ENCODE measurements at regions of chr1 and their contacts with region 1.

Region 1: GRCh38 chr1:113978863-113979702 is at the start of gene OLFML3:
- DNase-seq: peak; percentile 77
- H3K4me3 ChIP-seq: peak within 1 kb of the TSS; percentile 66
- CTCF ChIP-seq: peak; percentile 61

Region 2: DNA sequence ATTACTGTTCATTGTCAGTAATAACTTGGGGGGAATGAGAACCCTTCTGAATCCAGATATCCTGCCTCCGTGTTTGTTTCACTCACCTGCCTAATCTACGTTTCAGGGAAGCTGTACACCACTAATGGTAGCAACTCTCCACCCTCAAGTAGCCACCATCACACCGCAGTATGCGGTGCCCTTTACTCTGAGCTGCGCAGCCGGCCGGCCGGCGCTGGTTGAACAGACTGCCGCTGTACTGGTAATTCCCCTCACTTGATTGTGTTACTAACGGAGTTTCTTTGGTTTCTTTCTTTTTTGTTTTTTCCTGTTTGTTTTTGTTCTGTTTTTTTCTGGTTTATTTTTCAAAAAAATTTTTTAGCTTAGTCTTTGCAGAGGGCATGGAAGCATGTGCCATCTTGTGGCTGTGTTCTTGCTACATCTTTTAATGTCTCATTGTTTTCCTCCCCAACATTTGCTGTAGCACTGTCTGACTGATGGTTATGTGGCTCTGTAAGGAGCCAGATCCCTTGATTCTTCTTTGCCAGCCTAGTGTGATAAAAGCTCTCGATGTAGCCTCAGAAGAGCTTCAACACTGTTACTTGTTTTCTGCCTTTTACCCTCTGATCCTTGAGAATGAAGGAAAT is 15.7 kb before region 1 on chr1:
- CTCF ChIA-PET with region 1: interaction called, 20 read pairs
- POLR2A ChIA-PET with region 1: no interaction called
- DNase-seq: no peak
- H3K4me3 ChIP-seq: no peak overlapping the region
- CTCF ChIP-seq: no peak

Region 3: DNA sequence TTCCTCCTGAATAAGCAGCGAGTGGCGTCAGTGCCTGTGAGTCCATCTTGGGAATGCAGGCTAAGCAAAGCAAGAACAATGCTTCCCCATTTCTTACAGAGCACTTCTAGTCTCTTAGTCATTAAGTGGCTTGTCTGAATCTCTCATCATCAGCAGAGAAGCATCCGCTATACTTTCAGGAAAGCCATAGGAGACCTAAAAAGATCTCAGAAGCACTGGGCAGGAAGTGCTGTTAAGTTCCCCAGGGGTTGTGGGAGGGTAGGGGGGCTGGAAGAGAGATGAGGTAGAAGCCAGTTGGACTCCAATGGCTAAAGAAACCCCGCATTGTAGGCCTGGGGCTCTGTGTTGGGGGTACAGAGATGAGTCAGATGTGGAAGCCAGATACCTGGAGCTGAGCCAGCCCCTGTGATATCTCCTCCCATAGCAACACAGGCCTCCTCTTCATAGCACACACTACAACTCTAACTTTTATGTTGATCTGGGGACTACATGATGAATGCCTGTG is 129.7 kb after region 1 on chr1:
- CTCF ChIA-PET with region 1: no interaction called
- POLR2A ChIA-PET with region 1: no interaction called
- DNase-seq: no peak
- H3K4me3 ChIP-seq: no peak overlapping the region
- CTCF ChIP-seq: no peak

Region 4: DNA sequence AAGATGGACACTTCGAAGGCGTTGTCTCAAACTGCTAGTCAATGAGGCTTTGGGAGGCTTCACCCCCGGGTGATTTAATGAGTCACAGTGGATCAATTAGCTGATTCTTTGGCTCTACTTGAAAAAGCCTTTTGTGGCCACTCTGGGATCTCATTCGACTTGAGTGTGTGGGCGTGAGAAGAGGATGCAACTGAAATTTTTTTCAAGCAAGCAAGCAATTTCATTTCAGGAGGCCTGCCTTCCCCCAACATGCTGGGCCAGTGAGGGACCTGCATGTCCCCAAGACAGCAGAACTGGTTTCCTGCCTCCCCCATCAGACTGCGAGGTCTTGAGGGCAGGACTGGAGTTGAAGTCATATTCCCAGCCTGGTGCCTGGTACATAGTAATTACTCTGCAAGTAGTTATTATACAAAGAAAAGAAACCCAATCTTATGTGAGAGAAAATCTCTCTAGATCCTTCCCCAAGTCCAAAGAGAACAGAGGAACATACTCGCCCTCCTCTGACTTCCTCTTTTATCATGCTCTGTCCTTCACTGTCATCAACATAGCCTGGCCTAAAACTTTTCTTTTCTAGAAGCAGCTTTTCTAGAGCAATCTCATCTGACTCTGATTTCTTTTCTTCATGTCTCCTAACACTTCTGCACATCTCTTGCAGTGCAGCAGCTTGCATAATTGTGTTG is 151.9 kb after region 1 on chr1:
- CTCF ChIA-PET with region 1: interaction called, 12 read pairs
- POLR2A ChIA-PET with region 1: no interaction called
- DNase-seq: no peak
- H3K4me3 ChIP-seq: no peak overlapping the region
- CTCF ChIP-seq: no peak

Region 5: GRCh38 chr1:114215436-114215835 is 236.4 kb after region 1 on chr1:
- CTCF ChIA-PET with region 1: interaction called, 47 read pairs
- POLR2A ChIA-PET with region 1: no interaction called
- DNase-seq: no peak
- H3K4me3 ChIP-seq: no peak overlapping the region
- CTCF ChIP-seq: no peak

Region 6: DNA sequence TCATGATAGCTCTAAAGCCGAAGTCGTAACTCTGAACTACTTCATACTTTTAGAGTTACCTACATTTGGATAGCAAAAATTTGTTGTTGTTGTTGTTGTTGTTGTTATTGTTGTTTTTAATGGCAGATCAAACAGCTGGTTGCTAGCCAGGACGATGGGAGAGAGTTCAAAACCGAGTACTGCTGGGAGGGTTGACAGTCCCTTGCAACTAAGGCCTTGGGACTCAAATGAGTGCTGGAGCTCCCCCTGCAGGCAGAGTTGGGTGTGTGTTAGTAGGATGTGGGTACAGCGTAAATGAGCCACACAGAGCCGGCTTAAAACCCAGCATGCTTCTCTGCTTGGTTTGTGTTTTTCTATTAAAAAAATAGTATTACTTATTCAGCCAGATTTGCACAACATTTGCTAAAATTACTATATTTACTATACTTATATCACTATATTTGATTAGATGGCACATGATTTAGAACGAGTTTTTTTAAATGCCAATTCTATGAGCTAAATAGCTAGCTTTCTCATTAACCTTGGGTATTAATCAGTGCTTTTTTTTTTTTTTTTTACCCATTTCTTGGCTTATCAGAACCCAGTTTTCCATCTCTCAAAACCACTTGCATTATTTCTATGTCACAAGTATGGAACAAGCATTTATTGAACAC is 303.8 kb after region 1 on chr1:
- CTCF ChIA-PET with region 1: interaction called, 238 read pairs
- POLR2A ChIA-PET with region 1: interaction called, 3 read pairs
- DNase-seq: peak; percentile 49
- H3K4me3 ChIP-seq: no peak overlapping the region
- CTCF ChIP-seq: peak; percentile 94

Region 7: GRCh38 chr1:114320586-114320985 is 341.5 kb after region 1 on chr1:
- CTCF ChIA-PET with region 1: interaction called, 14 read pairs
- POLR2A ChIA-PET with region 1: no interaction called
- DNase-seq: peak; percentile 63
- H3K4me3 ChIP-seq: no peak overlapping the region
- CTCF ChIP-seq: no peak

Region 8: GRCh38 chr1:114428083-114428749 is 449.1 kb after region 1 on chr1:
- CTCF ChIA-PET with region 1: interaction called, 19 read pairs
- POLR2A ChIA-PET with region 1: no interaction called
- DNase-seq: no peak
- H3K4me3 ChIP-seq: no peak overlapping the region
- CTCF ChIP-seq: peak; percentile 12